CD4-positive, alpha-beta T cell (primary cell): ENCODE measurements at regions of chr10 and their contacts with region 1.

Region 1: DNA sequence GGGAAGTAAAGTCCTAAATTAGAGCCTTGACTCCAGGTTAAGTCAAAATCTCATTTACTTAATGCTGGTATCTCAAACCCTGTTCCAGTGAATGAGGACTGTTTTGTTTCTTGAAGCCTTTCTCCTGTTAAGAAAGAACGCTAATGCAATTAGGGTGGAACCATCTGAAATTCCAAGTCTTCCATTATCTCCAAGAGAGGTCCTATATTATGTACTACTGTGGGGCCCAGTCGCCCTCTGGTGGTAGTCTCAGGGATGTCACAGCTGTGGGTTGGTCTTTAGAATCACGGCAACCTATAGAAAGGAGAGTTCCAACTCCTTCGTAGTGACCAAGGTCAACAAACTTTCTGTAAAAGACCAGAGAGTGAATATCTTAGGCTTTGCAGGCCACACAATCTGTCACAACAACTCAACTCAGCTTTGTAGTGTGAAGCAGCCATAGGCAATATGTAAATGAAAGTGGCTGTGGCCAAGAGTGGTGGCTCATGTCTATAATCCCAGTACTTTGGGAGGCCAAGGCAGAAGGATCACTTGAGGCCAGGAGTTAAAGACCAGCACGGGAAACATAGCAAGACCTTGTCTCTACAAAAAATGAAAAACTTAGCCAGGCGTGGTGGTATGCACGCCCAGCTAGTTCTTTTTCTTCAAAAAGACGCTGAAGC is 9.3 kb downstream of the RPP38 start:
- DNase-seq: peak; percentile 43 to 83 (median 59)
- ATAC-seq: peak; percentile 96
- H3K4me3 ChIP-seq: no peak overlapping the region
- H3K4me3 Mint-ChIP-seq: no peak overlapping the region
- H3K27ac ChIP-seq: no peak overlapping the region
- H3K27ac Mint-ChIP-seq: peak overlapping the region; percentile 63
- H3K4me1 ChIP-seq: peaks cover 6% of the 10 kb centered on the region
- H3K4me1 Mint-ChIP-seq: peaks cover 8% of the 10 kb centered on the region
- H3K27me3 ChIP-seq: no peaks in the 10 kb centered on the region
- H3K27me3 Mint-ChIP-seq: no peaks in the 10 kb centered on the region
- CTCF ChIP-seq: peak; percentile 94

Region 2: DNA sequence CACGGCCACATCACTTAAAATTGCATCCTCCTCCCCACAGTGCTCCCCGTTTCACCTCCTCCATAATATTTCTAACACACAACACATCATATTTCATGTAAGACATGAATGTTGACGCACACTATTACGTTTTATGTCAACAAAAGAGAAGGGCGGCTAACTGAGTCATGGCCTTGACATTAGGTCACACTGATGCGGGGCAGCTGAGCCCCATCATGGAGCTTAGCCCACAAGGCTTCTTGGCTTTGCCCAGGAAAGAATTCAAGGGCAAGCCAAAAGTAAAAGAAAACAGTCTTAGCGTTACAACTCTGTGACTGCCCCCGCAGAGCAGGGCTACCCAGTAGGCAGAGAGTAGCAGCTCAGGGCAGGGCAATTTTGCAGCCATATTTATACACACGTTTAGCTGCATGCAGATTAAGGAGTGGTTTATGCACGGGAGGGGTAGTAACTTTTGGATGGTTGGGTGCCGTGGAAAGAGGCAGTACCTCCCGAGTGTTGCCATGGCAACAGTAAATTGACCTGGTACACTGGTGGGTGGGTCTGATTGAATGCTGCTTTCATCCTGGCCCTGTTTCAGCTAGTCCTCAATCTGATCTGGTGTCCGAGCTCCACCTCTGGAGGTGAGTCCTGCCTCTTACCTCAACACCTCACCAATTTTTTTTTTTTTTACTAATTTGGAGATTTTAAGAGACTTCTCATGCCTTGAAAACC is 619.6 kb before region 1 on chr10:
- CTCF ChIA-PET with region 1: no interaction called
- POLR2A ChIA-PET with region 1: no interaction called
- intact Hi-C with region 1: loop called in 1 of 2 experiments (anchors 10 kb)
- DNase-seq: no peak
- ATAC-seq: no peak
- H3K4me3 ChIP-seq: no peak overlapping the region
- H3K4me3 Mint-ChIP-seq: no peak overlapping the region
- H3K27ac ChIP-seq: no peak overlapping the region
- H3K27ac Mint-ChIP-seq: no peak overlapping the region
- H3K4me1 ChIP-seq: no peaks in the 10 kb centered on the region
- H3K4me1 Mint-ChIP-seq: no peaks in the 10 kb centered on the region
- H3K27me3 ChIP-seq: peaks cover 7 to 13% of the 10 kb centered on the region in 2 experiments
- H3K27me3 Mint-ChIP-seq: peaks cover 47% of the 10 kb centered on the region
- CTCF ChIP-seq: no peak

Region 3: DNA sequence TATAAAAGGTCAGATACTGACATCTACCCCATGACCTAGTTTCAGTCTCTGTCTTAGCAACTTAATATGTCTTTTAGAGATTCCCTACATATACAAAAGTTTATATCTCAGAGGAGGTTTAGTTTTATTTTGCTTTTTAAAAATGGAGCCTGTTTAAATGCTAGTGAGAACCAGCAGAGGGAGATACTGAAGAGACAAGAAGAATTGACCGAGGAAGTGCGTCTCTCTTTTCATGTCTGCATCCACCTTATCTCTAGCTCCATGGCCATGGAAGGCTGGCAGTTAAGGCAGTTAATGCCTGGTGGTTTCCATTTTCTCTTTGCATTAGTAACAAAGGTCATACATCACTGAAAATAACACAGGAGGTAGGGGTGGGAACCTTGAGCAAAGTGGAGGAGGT is 217.2 kb before region 1 on chr10:
- CTCF ChIA-PET with region 1: no interaction called
- POLR2A ChIA-PET with region 1: no interaction called
- intact Hi-C with region 1: loop called in 1 of 2 experiments (anchors 5 kb)
- DNase-seq: peak in 3 of 14 experiments; percentile 28 to 49 (median 38)
- ATAC-seq: peak; percentile 63
- H3K4me3 ChIP-seq: no peak overlapping the region
- H3K4me3 Mint-ChIP-seq: no peak overlapping the region
- H3K27ac ChIP-seq: no peak overlapping the region
- H3K27ac Mint-ChIP-seq: no peak overlapping the region
- H3K4me1 ChIP-seq: no peaks in the 10 kb centered on the region
- H3K4me1 Mint-ChIP-seq: peaks cover 6% of the 10 kb centered on the region
- H3K27me3 ChIP-seq: no peaks in the 10 kb centered on the region
- H3K27me3 Mint-ChIP-seq: no peaks in the 10 kb centered on the region
- CTCF ChIP-seq: peak; percentile 33

Region 4: GRCh38 chr10:14995964-14996565 is 110.4 kb before region 1 on chr10:
- CTCF ChIA-PET with region 1: no interaction called
- POLR2A ChIA-PET with region 1: no interaction called
- intact Hi-C with region 1: loop called in 1 of 2 experiments (anchors 1 kb)
- DNase-seq: no peak
- ATAC-seq: no peak
- H3K4me3 ChIP-seq: no peak overlapping the region
- H3K4me3 Mint-ChIP-seq: no peak overlapping the region
- H3K27ac ChIP-seq: no peak overlapping the region
- H3K27ac Mint-ChIP-seq: no peak overlapping the region
- H3K4me1 ChIP-seq: no peaks in the 10 kb centered on the region
- H3K4me1 Mint-ChIP-seq: peaks cover 8% of the 10 kb centered on the region
- H3K27me3 ChIP-seq: no peaks in the 10 kb centered on the region
- H3K27me3 Mint-ChIP-seq: peaks cover 2% of the 10 kb centered on the region
- CTCF ChIP-seq: no peak

Region 5: GRCh38 chr10:15370856-15371701 is 264.6 kb after region 1 on chr10 and contains the start of gene FAM171A1:
- CTCF ChIA-PET with region 1: no interaction called
- POLR2A ChIA-PET with region 1: no interaction called
- intact Hi-C with region 1: loop called (anchors 2 to 10 kb)
- DNase-seq: peak; percentile 47 to 88 (median 62)
- ATAC-seq: peak; percentile 79
- H3K4me3 ChIP-seq: peak within 1 kb of the TSS; percentile 43
- H3K4me3 Mint-ChIP-seq: peak within 1 kb of the TSS; percentile 83
- H3K27ac ChIP-seq: no peak within 1 kb of the TSS
- H3K27ac Mint-ChIP-seq: no peak within 1 kb of the TSS
- H3K4me1 ChIP-seq: peaks cover 16% of the 10 kb centered on the region
- H3K4me1 Mint-ChIP-seq: peaks cover 9% of the 10 kb centered on the region
- H3K27me3 ChIP-seq: peaks cover 6 to 11% of the 10 kb centered on the region in 2 experiments
- H3K27me3 Mint-ChIP-seq: peaks cover 10% of the 10 kb centered on the region
- CTCF ChIP-seq: no peak
- total RNA-seq, gene FAM171A1: 1.8 to 2.6 TPM